ENCODE measurements at regions of chr11 and their contacts with region 1.

Region 1: GRCh38 chr11:121655537-121656327 is 203.0 kb upstream of the SORL1-AS1 start:
- DNase-seq: peak; percentile 87 to 93
- ATAC-seq: peak; percentile 95 to 97 (median 96)
- H3K4me3 ChIP-seq: peak overlapping the region; percentile 64
- H3K27ac ChIP-seq: peak overlapping the region; percentile 86
- H3K4me1 ChIP-seq: peaks cover 11% of the 10 kb centered on the region
- H3K27me3 ChIP-seq: no peaks in the 10 kb centered on the region
- CTCF ChIP-seq: peak; percentile 84

Region 2: DNA sequence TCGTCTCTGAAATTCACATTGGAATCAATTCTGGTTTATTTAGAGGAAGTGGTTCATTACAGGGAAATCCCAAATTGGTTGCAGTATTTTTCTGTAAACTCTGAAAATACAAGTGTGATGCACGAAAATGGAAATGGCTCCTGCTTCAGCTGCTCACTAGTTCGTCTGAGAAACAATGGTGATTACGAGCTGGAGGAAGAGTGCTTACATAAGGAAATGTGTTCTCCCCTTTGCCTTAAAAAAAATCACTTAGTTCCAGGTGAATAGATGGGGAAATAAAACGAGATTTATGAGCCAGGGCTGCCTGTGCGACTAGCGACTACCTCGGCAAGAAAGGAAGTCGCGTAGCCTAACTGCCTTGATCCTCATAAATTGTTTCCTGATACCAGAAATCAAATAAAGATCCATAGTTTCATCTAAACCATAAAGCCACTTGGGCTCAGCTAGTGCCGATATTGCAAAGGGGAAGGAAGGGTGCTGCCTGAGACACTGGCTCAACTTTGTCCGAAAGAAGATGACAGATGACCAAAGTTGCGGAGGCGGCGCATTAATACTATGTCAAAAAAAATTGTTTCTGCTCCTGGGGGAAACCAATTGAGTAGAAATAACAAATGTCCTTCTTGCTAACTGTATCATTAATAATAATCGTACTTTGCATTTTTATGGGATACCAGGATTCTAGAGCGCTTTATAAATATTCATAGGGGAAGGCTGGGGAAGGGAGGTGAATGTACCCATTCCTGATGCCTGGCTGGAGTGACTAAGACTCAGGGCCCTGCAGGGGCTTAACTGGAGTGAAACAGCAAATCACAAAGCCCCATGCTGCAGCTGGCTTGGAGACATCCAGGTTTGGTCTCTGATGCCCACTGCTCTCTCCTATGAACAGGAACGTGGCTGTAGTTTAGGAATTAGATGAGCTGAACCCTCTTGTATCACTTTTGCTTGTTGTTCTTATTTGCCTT is 274.6 kb after region 1 on chr11:
- intact Hi-C with region 1: loop called in 1 of 2 experiments (anchors 10 kb)
- DNase-seq: no peak
- ATAC-seq: no peak
- H3K4me3 ChIP-seq: peak overlapping the region; percentile 56
- H3K27ac ChIP-seq: no peak overlapping the region
- H3K4me1 ChIP-seq: peaks cover 8% of the 10 kb centered on the region
- H3K27me3 ChIP-seq: no peaks in the 10 kb centered on the region
- CTCF ChIP-seq: no peak

Region 3: GRCh38 chr11:122020902-122021301 is 365.2 kb after region 1 on chr11:
- intact Hi-C with region 1: loop called in 1 of 2 experiments (anchors 5 kb)
- DNase-seq: no peak
- ATAC-seq: no peak
- H3K4me3 ChIP-seq: no peak overlapping the region
- H3K27ac ChIP-seq: no peak overlapping the region
- H3K4me1 ChIP-seq: no peaks in the 10 kb centered on the region
- H3K27me3 ChIP-seq: no peaks in the 10 kb centered on the region
- CTCF ChIP-seq: peak; percentile 45

Region 4: GRCh38 chr11:122101625-122102291 is 446.0 kb after region 1 on chr11:
- intact Hi-C with region 1: loop called (anchors 1 to 5 kb)
- DNase-seq: peak; percentile 49 to 67
- ATAC-seq: peak; percentile 78 to 87 (median 86)
- H3K4me3 ChIP-seq: peak overlapping the region; percentile 76
- H3K27ac ChIP-seq: peak overlapping the region; percentile 90
- H3K4me1 ChIP-seq: peaks cover 11% of the 10 kb centered on the region
- H3K27me3 ChIP-seq: peaks cover 0 to 6% (median 0%) of the 10 kb centered on the region in 3 donors
- CTCF ChIP-seq: peak; percentile 61

Region 5: GRCh38 chr11:122202951-122203456 is 547.3 kb after region 1 on chr11:
- intact Hi-C with region 1: loop called (anchors 1 to 2 kb)
- DNase-seq: peak; percentile 70 to 83
- ATAC-seq: peak; percentile 92 to 96 (median 94)
- H3K4me3 ChIP-seq: peak overlapping the region; percentile 54
- H3K27ac ChIP-seq: no peak overlapping the region
- H3K4me1 ChIP-seq: peaks cover 15% of the 10 kb centered on the region
- H3K27me3 ChIP-seq: no peaks in the 10 kb centered on the region
- CTCF ChIP-seq: peak; percentile 98

Region 6: DNA sequence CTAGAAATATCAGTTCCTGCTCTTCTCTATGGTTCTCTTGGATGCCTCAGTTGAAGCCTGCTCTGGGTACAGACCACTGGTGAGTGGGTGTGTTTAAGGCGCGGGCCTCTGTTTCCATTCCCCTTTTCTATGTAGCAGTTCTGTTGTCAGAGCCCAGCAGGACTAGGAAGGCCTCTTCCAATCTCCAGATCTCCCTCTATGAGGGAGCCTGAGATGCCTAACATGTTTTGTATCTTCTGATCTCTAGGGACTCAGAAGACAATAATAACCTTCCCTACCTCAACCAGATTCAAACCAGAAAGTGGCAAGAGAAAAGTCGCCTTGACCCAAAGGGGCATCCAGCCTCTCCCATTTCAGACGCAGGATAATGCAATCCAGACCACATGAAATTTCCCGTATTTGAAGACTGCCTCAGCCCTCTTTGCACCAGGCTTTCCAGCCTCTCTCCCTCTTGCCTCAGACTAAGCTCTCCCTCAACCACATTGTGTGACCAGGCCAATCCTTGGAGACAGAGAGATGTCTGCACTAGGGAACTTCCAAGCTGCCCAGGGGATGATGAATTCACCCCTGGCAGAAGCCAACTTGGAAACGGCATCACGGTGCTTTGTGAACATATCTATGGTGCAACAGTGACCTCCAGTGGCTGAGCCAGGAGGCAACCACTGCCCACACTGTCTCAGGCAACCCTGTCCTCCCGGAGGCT is 849.7 kb after region 1 on chr11:
- intact Hi-C with region 1: loop called (anchors 1 to 5 kb)
- DNase-seq: peak; percentile 78 to 87
- ATAC-seq: peak; percentile 98 to 99 (median 99)
- H3K4me3 ChIP-seq: no peak overlapping the region
- H3K27ac ChIP-seq: no peak overlapping the region
- H3K4me1 ChIP-seq: peaks cover 9% of the 10 kb centered on the region
- H3K27me3 ChIP-seq: no peaks in the 10 kb centered on the region
- CTCF ChIP-seq: peak; percentile 87

Measured in psoas muscle (tissue), 8 donors.